ENCODE measurements at regions of chr2 and their contacts with region 1.

Region 1: DNA sequence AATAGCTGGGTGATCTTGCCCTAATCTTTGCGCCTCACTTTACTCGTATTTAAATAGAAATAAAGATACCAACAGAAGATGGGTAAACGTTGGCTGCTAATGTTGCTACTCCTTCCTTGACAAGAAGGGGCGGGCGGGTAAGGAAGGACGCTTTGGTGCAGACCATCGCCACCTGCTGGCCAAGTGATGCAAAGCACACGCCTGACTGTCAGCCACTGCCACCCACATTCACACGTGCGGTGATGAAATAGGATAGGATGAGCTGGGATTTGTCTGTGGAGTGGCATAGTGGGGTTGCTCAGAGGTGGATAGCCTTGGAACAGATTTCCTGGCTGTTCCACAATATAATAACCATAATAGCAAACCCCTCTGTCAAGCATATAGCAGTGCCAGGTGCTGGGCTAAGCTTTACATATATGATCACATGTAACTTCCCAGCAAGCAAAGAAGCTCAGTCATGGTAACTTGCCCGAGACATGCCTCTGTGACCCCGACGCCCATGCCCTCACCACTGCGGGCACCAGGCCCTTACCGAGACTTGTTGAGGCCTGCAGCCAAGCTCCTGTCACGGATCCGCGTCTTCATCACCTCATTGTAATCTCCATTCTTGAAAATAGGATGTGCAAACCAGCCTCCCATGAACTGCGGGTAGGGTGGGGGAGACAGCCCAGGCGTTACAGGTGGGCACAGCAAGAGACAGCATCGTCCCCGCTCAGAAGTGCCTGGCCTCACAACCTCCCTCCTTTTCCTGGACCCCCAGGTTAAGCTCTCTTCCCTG is 39.3 kb downstream of the LCT start:
- DNase-seq: peak; percentile 89
- H3K4me3 Mint-ChIP-seq: no peak overlapping the region
- H3K27ac Mint-ChIP-seq: no peak overlapping the region
- H3K4me1 Mint-ChIP-seq: peaks cover 12% of the 10 kb centered on the region
- H3K27me3 Mint-ChIP-seq: no peaks in the 10 kb centered on the region

Region 2: GRCh38 chr2:135004005-135004746 is 793.5 kb before region 1 on chr2:
- CTCF ChIA-PET with region 1: interaction called, 28 read pairs
- POLR2A ChIA-PET with region 1: no interaction called
- intact Hi-C with region 1: no loop called
- DNase-seq: peak; percentile 82
- H3K4me3 Mint-ChIP-seq: no peak overlapping the region
- H3K27ac Mint-ChIP-seq: no peak overlapping the region
- H3K4me1 Mint-ChIP-seq: peaks cover 4% of the 10 kb centered on the region
- H3K27me3 Mint-ChIP-seq: peaks cover 25% of the 10 kb centered on the region

Region 3: GRCh38 chr2:135615404-135615803 is 182.3 kb before region 1 on chr2:
- CTCF ChIA-PET with region 1: no interaction called
- POLR2A ChIA-PET with region 1: no interaction called
- intact Hi-C with region 1: loop called (anchors 10 kb)
- DNase-seq: no peak
- H3K4me3 Mint-ChIP-seq: no peak overlapping the region
- H3K27ac Mint-ChIP-seq: no peak overlapping the region
- H3K4me1 Mint-ChIP-seq: peaks cover 7% of the 10 kb centered on the region
- H3K27me3 Mint-ChIP-seq: no peaks in the 10 kb centered on the region

Region 4: DNA sequence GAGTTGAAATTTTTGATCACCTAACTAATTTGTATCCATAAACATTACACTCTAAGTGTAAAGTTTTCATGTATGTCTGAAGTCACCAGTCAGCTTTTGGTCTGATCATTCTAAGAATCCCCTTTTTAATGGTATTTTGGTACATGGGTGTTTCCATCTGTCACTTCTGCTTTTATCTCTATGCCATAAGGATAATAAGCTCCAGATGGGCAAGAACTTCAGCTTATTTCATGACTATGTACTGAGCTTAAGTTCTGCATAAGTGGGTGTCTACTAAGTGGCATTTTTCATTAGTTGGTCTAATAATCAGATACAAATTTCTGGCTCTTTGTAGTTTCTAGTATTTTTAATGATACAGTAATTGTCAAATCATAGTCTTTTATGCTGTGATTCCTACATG is 35.7 kb before region 1 on chr2:
- CTCF ChIA-PET with region 1: interaction called, 12 read pairs
- POLR2A ChIA-PET with region 1: no interaction called
- intact Hi-C with region 1: no loop called
- DNase-seq: no peak
- H3K4me3 Mint-ChIP-seq: no peak overlapping the region
- H3K27ac Mint-ChIP-seq: no peak overlapping the region
- H3K4me1 Mint-ChIP-seq: peaks cover 16% of the 10 kb centered on the region
- H3K27me3 Mint-ChIP-seq: no peaks in the 10 kb centered on the region

Region 5: GRCh38 chr2:135785032-135785431 is 12.7 kb before region 1 on chr2:
- CTCF ChIA-PET with region 1: interaction called, 35 read pairs
- POLR2A ChIA-PET with region 1: no interaction called
- intact Hi-C with region 1: no loop called
- DNase-seq: no peak
- H3K4me3 Mint-ChIP-seq: no peak overlapping the region
- H3K27ac Mint-ChIP-seq: no peak overlapping the region
- H3K4me1 Mint-ChIP-seq: no peaks in the 10 kb centered on the region
- H3K27me3 Mint-ChIP-seq: no peaks in the 10 kb centered on the region

Region 6: GRCh38 chr2:135825550-135826176 is 28.0 kb after region 1 on chr2:
- CTCF ChIA-PET with region 1: interaction called, 77 read pairs
- POLR2A ChIA-PET with region 1: no interaction called
- intact Hi-C with region 1: loop called (anchors 1 kb)
- DNase-seq: no peak
- H3K4me3 Mint-ChIP-seq: no peak overlapping the region
- H3K27ac Mint-ChIP-seq: no peak overlapping the region
- H3K4me1 Mint-ChIP-seq: peaks cover 9% of the 10 kb centered on the region
- H3K27me3 Mint-ChIP-seq: no peaks in the 10 kb centered on the region

Region 7: GRCh38 chr2:136143603-136144451 is 346.1 kb after region 1 on chr2:
- CTCF ChIA-PET with region 1: no interaction called
- POLR2A ChIA-PET with region 1: no interaction called
- intact Hi-C with region 1: no loop called
- DNase-seq: no peak
- H3K4me3 Mint-ChIP-seq: no peak overlapping the region
- H3K27ac Mint-ChIP-seq: no peak overlapping the region
- H3K4me1 Mint-ChIP-seq: peaks cover 32% of the 10 kb centered on the region
- H3K27me3 Mint-ChIP-seq: peaks cover 3% of the 10 kb centered on the region

Region 8: GRCh38 chr2:137096693-137097092 is 1299.0 kb after region 1 on chr2:
- CTCF ChIA-PET with region 1: no interaction called
- POLR2A ChIA-PET with region 1: no interaction called
- intact Hi-C with region 1: no loop called
- DNase-seq: no peak
- H3K4me3 Mint-ChIP-seq: no peak overlapping the region
- H3K27ac Mint-ChIP-seq: no peak overlapping the region
- H3K4me1 Mint-ChIP-seq: no peaks in the 10 kb centered on the region
- H3K27me3 Mint-ChIP-seq: peaks cover 2% of the 10 kb centered on the region

Measured in activated CD4-positive, alpha-beta memory T cell treated with anti-CD3 and anti-CD28 coated beads for 36 hours (primary cell).